Activated CD4-positive, alpha-beta memory T cell treated with anti-CD3 and anti-CD28 coated beads, Interleukin-2, amount 10 ng/mL, durations not matched to agents 7 days and 5 days (primary cell): ENCODE measurements at regions of chr2 and their contacts with region 1.

Region 1: DNA sequence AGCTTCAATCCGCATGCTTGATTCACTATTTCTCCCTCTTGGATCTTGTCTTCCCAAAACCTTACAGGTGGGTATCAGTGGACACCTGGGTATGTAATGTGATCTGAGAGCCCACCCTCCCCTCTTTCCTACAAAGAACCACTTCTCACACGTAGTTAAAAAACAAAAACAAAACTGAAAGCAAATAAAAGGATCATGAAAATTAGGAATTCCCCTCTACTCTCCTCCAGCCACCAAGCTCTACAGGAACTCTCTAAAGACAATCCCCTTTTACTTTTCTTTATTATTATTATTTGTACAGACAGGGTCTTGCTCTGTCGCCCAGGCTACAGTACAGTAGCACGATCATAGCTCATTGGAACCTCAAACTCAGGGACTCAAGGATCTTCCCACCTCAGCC is 40.8 kb upstream of the MYO1B start:
- DNase-seq: no peak
- H3K4me3 Mint-ChIP-seq: peak overlapping the region; percentile 72
- H3K27ac Mint-ChIP-seq: peak overlapping the region; percentile 73
- H3K4me1 Mint-ChIP-seq: peaks cover 48% of the 10 kb centered on the region
- H3K27me3 Mint-ChIP-seq: no peaks in the 10 kb centered on the region

Region 2: DNA sequence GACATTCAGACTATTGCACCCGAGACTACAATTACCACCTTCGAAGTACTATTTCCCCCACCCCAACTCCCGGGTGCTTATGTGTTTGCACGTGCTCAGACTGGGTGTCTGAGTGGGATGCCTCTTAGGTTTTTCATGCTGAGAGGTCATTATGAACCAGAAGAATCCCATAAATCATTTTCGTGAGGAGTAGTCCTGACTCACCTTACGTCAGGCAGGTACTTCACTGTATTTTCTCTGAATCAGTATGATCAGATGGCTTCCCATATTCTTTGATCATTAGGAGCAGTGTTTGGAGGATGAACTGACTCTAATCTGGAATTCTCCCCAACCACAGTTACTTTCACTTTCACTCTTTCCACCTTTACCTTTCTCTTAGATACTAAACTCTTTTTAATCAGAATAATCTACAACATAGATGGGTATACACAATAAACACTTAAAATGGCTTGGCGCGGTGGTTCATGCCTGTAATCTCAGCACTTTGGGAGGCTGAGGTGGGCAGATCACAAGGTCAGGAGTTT is 15.3 kb before region 1 on chr2:
- CTCF ChIA-PET with region 1: interaction called, 5 read pairs
- POLR2A ChIA-PET with region 1: interaction called, 16 read pairs
- DNase-seq: no peak
- H3K4me3 Mint-ChIP-seq: peak overlapping the region; percentile 38
- H3K27ac Mint-ChIP-seq: no peak overlapping the region
- H3K4me1 Mint-ChIP-seq: peaks cover 40% of the 10 kb centered on the region
- H3K27me3 Mint-ChIP-seq: no peaks in the 10 kb centered on the region

Region 3: DNA sequence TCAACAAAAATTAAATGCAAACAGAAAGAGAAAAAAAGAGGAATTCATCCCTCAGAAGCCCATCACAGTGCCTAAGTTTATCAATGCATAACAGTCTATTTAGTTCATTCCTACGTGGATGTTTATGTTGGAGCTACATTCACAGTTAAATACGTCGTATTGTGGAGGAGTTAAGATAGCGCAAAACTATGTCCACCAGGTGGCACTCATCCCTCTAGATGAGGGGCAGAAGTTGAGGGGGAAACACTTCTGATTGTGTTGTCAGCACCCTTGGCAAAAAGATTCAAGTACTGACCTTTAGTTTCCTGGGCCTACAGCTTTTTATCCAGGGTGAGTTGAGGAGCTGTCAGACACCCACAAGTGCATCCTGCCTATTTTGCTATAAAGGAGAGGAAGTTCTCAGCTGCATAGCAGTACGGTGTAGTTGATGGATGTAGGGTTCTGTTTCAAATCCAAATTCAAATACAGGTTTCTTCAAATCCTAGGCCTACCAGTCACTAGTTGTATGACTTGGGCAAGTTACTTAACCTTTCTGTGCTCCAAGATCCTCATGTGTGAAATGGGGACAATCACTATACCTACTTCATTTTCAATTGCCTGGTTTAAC is 14.0 kb after region 1 on chr2:
- CTCF ChIA-PET with region 1: interaction called, 16 read pairs
- POLR2A ChIA-PET with region 1: no interaction called
- DNase-seq: peak; percentile 28
- H3K4me3 Mint-ChIP-seq: no peak overlapping the region
- H3K27ac Mint-ChIP-seq: no peak overlapping the region
- H3K4me1 Mint-ChIP-seq: peaks cover 15% of the 10 kb centered on the region
- H3K27me3 Mint-ChIP-seq: no peaks in the 10 kb centered on the region